ENCODE measurements at regions of chr14 and their contacts with region 1.

Region 1: DNA sequence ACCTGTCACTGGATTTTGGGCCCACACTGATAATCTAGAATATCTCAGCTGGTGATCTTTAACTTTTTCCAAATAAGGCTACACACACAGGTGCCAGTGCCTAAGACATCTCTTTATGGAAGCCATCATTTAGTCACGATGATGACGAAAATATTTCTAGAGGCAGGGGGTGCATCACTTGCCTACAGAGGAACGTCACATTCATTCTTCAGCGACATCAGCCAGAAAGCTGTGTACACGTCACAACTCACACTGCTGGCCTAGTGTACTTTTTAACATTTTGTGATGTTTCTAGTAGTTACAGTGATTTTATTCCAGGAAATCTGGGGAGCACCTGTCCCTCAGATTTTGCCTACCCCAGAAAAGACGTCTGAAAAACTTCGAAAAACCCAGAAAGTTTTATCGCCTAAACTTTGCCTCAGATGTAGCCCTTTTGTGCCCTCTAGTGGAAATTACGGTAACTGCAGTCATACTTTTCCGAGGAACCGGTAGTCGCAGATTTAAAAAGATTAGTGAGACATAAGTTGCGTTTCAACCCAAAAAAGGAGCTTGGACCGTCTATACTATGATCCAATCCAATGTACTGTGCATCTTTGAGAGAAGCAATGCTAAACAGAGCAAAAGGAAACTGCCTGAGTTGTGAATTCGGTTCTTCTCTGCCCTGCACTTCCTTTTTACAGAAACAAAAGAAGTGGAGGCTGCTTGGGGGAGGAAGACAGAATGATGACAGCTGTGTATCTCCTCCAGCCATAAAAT is 64.3 kb upstream of the STON2 start:
- DNase-seq: peak in 13 of 14 experiments; percentile 10 to 86 (median 47)
- ATAC-seq: peak; percentile 80
- H3K4me3 ChIP-seq: peak overlapping the region; percentile 66
- H3K4me3 Mint-ChIP-seq: peak overlapping the region; percentile 86
- H3K27ac ChIP-seq: peak overlapping the region in 1 of 2 donors; percentile 36
- H3K27ac Mint-ChIP-seq: peak overlapping the region; percentile 86
- H3K4me1 ChIP-seq: peaks cover 4% of the 10 kb centered on the region
- H3K4me1 Mint-ChIP-seq: peaks cover 8% of the 10 kb centered on the region
- H3K27me3 ChIP-seq: no peaks in the 10 kb centered on the region
- H3K27me3 Mint-ChIP-seq: no peaks in the 10 kb centered on the region
- CTCF ChIP-seq: peak; percentile 93

Region 2: GRCh38 chr14:81170104-81170828 is 294.2 kb before region 1 on chr14:
- CTCF ChIA-PET with region 1: interaction called, 3 read pairs
- POLR2A ChIA-PET with region 1: no interaction called
- intact Hi-C with region 1: loop called in 1 of 2 experiments (anchors 5 kb)
- DNase-seq: peak; percentile 79 to 93 (median 86)
- ATAC-seq: peak; percentile 97
- H3K4me3 ChIP-seq: peak overlapping the region; percentile 82
- H3K4me3 Mint-ChIP-seq: peak overlapping the region; percentile 88
- H3K27ac ChIP-seq: peak overlapping the region; percentile 58 to 72
- H3K27ac Mint-ChIP-seq: peak overlapping the region; percentile 94
- H3K4me1 ChIP-seq: peaks cover 20% of the 10 kb centered on the region
- H3K4me1 Mint-ChIP-seq: peaks cover 28% of the 10 kb centered on the region
- H3K27me3 ChIP-seq: no peaks in the 10 kb centered on the region
- H3K27me3 Mint-ChIP-seq: no peaks in the 10 kb centered on the region
- CTCF ChIP-seq: peak; percentile 86

Region 3: DNA sequence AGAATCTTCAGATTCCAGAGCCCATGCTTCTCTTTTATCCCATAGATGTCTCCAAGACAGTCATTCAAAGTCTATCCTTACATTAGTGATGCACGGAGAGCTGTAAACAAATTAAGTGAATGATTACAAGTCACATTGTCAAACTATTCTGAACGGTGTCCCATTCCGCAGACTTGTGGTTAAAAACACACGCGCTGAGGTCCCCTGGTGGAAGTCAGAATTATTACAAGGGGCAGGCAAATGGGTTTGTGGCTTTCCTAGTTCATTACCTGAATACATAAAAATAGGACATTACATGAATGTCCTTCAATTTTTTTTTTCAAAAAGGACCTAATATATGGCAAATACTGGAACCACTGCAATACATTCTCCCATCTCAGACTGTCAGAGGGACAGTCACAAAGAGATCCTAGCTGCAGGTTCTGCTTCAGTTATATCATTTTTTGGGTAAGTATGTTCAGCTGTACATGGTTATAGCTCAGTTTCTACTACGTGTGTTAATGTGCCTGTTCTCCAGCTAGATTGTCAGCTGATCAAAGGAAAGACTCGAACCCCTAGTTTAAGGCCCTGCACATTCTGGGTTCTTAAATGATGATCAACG is 11.2 kb before region 1 on chr14:
- CTCF ChIA-PET with region 1: interaction called, 15 read pairs
- POLR2A ChIA-PET with region 1: interaction called, 5 read pairs
- intact Hi-C with region 1: no loop called
- DNase-seq: peak in 13 of 14 experiments; percentile 19 to 73 (median 38)
- ATAC-seq: peak; percentile 76
- H3K4me3 ChIP-seq: no peak overlapping the region
- H3K4me3 Mint-ChIP-seq: no peak overlapping the region
- H3K27ac ChIP-seq: no peak overlapping the region
- H3K27ac Mint-ChIP-seq: no peak overlapping the region
- H3K4me1 ChIP-seq: peaks cover 3% of the 10 kb centered on the region
- H3K4me1 Mint-ChIP-seq: no peaks in the 10 kb centered on the region
- H3K27me3 ChIP-seq: peaks cover 0 to 6% of the 10 kb centered on the region in 2 experiments
- H3K27me3 Mint-ChIP-seq: peaks cover 12% of the 10 kb centered on the region
- CTCF ChIP-seq: peak; percentile 84